AG04450 (cell line): ENCODE measurements at regions of chr10 and their contacts with region 1.

Region 1: GRCh38 chr10:98361131-98362025 is 53.6 kb downstream of the PYROXD2 start:
- DNase-seq: peak; percentile 95
- H3K4me3 ChIP-seq: peak overlapping the region; percentile 34
- H3K27ac ChIP-seq: peak overlapping the region; percentile 97
- H3K27me3 ChIP-seq: no peaks in the 10 kb centered on the region
- CTCF ChIP-seq: no peak

Region 2: DNA sequence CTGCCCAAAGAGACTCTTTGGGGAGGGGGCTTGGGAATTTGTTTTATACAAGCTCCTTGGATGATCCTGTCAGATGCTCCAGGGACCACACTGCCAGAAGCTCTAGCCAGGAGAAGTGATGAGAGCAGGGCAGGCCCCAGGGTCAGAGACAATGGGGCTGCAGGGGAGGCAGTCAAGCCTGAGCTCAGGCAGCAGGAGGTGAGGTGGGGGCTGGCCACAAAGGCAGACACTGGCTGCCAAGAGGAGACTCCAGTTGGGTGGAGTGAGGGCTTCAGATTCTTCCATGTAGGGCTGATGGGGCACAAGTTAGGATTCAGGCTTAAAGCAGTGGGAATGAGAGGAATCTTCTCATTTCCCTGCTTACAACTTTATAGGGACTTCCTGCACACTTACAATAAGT is 57.8 kb before region 1 on chr10:
- CTCF ChIA-PET with region 1: interaction called, 13 read pairs
- POLR2A ChIA-PET with region 1: no interaction called
- DNase-seq: no peak
- H3K4me3 ChIP-seq: no peak overlapping the region
- H3K27ac ChIP-seq: no peak overlapping the region
- H3K27me3 ChIP-seq: peaks cover 34% of the 10 kb centered on the region
- CTCF ChIP-seq: no peak

Region 3: DNA sequence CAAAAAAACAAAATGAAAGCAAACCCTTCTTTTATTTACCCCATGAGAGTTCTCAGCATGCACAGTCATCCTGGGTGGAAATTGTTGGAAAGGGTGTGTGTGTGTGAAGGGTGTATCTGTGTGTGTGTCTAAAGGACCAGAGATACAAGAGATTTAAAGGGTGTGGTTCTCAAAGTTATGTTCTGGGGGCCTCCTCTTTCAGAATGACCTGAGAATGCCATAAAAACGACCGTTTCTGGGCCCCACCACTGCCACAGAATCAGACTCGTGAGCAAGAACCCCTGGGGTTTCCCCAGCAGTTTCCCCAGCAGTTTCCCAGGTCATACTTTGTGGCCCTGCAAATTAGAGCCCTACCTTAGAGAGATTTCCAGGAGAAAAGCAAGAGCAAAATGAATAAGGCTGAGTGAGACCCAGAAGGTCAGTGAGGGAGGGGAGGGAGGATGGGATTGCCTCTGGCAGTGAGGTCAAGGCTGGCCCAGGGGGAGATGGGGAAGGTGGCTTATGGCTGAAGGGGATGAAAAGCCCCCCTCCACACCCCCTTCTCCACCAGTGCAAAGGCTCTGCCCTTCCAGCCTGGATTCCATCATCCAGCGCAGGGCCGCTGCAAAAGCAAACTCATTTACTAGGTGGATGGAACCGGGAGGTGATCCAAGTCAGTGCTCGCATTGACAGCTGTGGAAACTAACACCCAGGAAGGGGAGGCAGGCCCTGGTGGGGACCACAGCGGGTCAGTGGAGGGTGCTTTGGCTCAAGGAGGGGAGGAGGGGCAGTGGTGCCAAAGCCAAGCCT is 43.4 kb after region 1 on chr10:
- CTCF ChIA-PET with region 1: no interaction called
- POLR2A ChIA-PET with region 1: interaction called, 12 read pairs
- DNase-seq: no peak
- H3K4me3 ChIP-seq: 0 out of 2 replicates have a peak overlapping the region, but pooled peaks have one; percentile 10
- H3K27ac ChIP-seq: peak overlapping the region; percentile 89
- H3K27me3 ChIP-seq: no peaks in the 10 kb centered on the region
- CTCF ChIP-seq: no peak

Region 4: DNA sequence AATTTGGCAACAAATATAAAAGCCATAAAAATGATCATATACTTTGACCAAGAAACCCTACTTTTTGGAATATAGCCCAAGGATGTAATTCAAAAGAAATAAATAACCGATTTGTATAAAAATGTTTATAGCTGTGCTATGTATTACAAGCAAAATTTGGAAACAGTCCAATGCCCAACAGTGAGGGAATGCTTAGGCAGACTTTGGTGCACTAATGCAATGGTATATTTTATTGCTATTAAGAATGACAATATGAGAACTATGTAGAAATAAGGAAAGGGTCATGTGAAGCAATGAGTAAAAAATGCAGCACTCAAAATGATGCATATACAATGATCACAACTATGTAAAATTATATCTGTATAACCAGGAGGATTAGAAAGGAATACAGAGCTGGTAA is 359.2 kb after region 1 on chr10:
- CTCF ChIA-PET with region 1: no interaction called
- POLR2A ChIA-PET with region 1: no interaction called
- DNase-seq: no peak
- H3K4me3 ChIP-seq: no peak overlapping the region
- H3K27ac ChIP-seq: no peak overlapping the region
- H3K27me3 ChIP-seq: no peaks in the 10 kb centered on the region
- CTCF ChIP-seq: no peak